ENCODE measurements at regions of chr4 and their contacts with region 1.

Region 1: DNA sequence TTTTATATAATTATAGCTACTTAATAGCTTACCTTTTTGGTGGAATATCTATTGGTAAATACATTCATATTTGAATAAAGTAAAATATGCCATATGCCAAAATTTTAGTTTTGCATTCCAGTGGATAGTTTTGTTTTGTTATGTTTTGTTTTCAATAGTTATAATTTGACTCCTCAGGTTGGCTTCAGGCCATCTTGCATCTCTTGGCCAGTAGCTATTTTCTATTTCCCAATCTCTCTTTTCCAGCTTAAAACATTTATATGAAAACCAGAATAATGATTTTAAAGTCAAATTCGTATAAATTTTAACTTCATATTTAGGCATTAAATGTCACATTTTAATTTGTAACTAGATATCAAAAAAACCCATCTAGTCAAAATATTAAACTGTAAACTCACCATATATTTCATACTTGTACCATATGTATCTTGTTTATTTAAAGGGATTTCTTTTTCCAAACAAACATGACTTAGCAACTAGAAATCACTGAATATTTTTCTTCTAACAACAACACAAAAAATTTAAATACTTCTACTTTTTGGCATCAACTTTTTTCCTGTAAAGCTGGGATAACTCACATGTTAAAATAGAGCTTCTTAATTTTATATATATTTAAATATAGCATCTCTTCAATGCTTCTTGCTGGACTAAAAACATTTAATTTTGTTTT is 1209.6 kb downstream of the PCDH7 start:
- DNase-seq: no peak
- ATAC-seq: no peak
- H3K4me3 ChIP-seq: no peak overlapping the region
- H3K27ac ChIP-seq: no peak overlapping the region
- H3K4me1 ChIP-seq: no peaks in the 10 kb centered on the region
- H3K27me3 ChIP-seq: no peaks in the 10 kb centered on the region
- CTCF ChIP-seq: no peak
- POLR2A ChIP-seq: no peak
- RAD21 ChIP-seq: no peak

Region 2: DNA sequence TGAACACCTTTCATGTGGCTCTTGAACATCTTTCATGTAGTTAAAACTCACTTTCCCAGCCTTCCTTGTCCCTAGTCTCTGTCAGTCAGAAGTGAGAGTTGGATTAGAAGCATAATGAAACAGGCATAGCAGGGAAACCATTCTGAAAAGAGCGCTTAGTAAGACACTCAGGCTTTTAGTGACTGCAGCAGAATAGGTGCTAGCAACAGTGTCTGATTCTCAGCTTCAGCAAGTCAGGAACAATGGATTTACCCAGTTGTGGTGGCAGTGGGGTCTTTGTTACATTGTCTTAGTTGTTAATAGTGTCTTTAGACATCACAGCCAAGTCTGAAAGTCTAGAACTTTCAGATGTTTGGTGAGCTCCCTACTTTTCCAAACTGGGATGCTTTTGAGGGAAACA is 1386.8 kb before region 1 on chr4:
- CTCF ChIA-PET with region 1: no interaction called
- POLR2A ChIA-PET with region 1: no interaction called
- RAD21 ChIA-PET with region 1: no interaction called
- intact Hi-C with region 1: no loop called
- DNase-seq: no peak
- ATAC-seq: no peak
- H3K4me3 ChIP-seq: no peak overlapping the region
- H3K27ac ChIP-seq: no peak overlapping the region
- H3K4me1 ChIP-seq: peaks cover 9% of the 10 kb centered on the region in 2 experiments
- H3K27me3 ChIP-seq: no peaks in the 10 kb centered on the region
- CTCF ChIP-seq: no peak
- POLR2A ChIP-seq: no peak
- RAD21 ChIP-seq: no peak

Region 3: GRCh38 chr4:31692402-31692940 is 237.3 kb before region 1 on chr4:
- CTCF ChIA-PET with region 1: no interaction called
- POLR2A ChIA-PET with region 1: no interaction called
- RAD21 ChIA-PET with region 1: no interaction called
- intact Hi-C with region 1: loop called (anchors 5 kb)
- DNase-seq: peak; percentile 8
- ATAC-seq: peak; percentile 52
- H3K4me3 ChIP-seq: no peak overlapping the region
- H3K27ac ChIP-seq: no peak overlapping the region
- H3K4me1 ChIP-seq: no peaks in the 10 kb centered on the region
- H3K27me3 ChIP-seq: no peaks in the 10 kb centered on the region
- CTCF ChIP-seq: peak in 2 of 3 experiments; percentile 46 to 52; a peak in 4 of 6 replicates
- POLR2A ChIP-seq: no peak
- RAD21 ChIP-seq: peak; percentile 57

Measured in HCT116 (cell line).